HCT116 (cell line): ENCODE measurements at regions of chr2 and their contacts with region 1.

Region 1: DNA sequence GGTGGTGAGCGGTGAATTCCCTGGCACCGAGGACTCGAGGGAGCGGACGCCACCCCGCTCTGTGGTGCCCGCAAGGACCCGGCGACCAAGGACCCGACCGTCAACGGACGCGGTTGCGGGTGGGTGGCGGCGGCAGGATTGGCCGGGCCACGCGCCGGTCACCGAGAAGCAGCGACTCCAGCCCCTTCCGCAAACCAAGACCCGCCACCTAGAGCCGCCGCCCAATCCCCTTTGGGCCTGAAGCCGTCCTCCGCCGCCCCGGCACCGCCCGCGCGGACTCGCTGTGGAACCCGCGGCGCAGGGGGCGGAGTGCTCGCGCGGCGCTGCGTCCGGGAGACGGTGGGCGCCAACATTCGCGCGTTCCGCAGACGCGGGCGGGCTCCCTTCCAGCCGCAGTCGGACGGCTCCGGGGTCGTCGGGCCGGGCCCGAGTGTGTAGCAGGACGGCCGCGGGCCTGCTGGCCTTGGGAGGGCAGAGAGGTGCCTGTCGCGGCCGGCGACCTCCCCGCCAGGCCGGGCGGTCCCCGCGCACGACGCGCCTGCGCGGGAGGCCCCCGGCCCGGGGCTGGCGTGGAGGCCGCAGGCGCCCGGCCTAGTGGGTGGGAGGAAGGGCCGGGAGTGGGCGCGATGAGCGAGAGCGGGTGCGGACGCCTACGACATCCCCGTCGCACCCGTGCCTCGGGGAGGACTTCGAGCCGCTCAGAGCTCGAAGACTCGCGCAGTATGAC is at the starts of genes FAM228B and PFN4:
- DNase-seq: peak; percentile 59
- ATAC-seq: peak; percentile 95
- H3K4me3 ChIP-seq: peak within 1 kb of the TSS; percentile 75 to 76
- H3K27ac ChIP-seq: peak within 1 kb of the TSS; percentile 76
- H3K4me1 ChIP-seq: peaks cover 7 to 15% of the 10 kb centered on the region in 2 experiments; a peak in 3 of 4 replicates
- H3K27me3 ChIP-seq: no peaks in the 10 kb centered on the region
- CTCF ChIP-seq: no peak
- POLR2A ChIP-seq: peak; percentile 59
- RAD21 ChIP-seq: no peak
- total RNA-seq, gene FAM228B: 5.6 TPM
- total RNA-seq, gene PFN4: not detected

Region 2: GRCh38 chr2:24046930-24047702 is 76.2 kb before region 1 on chr2 and contains the start of gene WDCP:
- CTCF ChIA-PET with region 1: no interaction called
- POLR2A ChIA-PET with region 1: no interaction called
- RAD21 ChIA-PET with region 1: no interaction called
- intact Hi-C with region 1: loop called (anchors 2 kb)
- DNase-seq: peak; percentile 95
- ATAC-seq: peak; percentile 93
- H3K4me3 ChIP-seq: peak within 1 kb of the TSS; percentile 86 to 93
- H3K27ac ChIP-seq: peak within 1 kb of the TSS; percentile 35
- H3K4me1 ChIP-seq: peaks cover 13 to 30% of the 10 kb centered on the region in 2 experiments
- H3K27me3 ChIP-seq: no peaks in the 10 kb centered on the region
- CTCF ChIP-seq: no peak
- POLR2A ChIP-seq: peak; percentile 86
- RAD21 ChIP-seq: no peak
- total RNA-seq, gene WDCP: 19.9 TPM